K562 (cell line): ENCODE measurements at regions of chr7 and their contacts with region 1.

Region 1: DNA sequence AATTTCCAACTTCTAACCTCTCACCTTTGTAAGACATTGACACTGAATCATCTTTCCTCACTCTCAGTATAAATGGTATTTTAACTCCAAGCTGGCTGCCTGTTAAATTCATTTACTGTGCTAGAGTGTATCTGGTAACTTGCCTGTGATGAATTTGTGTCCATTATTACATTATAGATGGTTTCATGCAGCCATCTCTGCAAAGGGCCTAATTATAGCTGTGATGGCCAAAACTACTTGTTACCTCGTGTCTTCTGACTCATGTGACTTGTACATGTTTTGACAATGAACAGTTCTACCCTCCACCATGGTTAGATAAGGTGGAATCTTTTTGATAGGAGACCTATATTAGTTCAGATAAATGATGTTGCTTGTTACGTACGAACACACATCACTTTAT is 392.0 kb downstream of the PAXIP1 start:
- DNase-seq: no peak
- ATAC-seq: no peak
- H3K4me3 ChIP-seq: no peak overlapping the region
- H3K27ac ChIP-seq: no peak overlapping the region
- H3K4me1 ChIP-seq: no peaks in the 10 kb centered on the region
- H3K27me3 ChIP-seq: peaks cover 7 to 9% of the 10 kb centered on the region in 2 experiments
- CTCF ChIP-seq: no peak
- EP300 ChIP-seq: no peak
- POLR2A ChIP-seq: no peak
- RAD21 ChIP-seq: no peak

Region 2: DNA sequence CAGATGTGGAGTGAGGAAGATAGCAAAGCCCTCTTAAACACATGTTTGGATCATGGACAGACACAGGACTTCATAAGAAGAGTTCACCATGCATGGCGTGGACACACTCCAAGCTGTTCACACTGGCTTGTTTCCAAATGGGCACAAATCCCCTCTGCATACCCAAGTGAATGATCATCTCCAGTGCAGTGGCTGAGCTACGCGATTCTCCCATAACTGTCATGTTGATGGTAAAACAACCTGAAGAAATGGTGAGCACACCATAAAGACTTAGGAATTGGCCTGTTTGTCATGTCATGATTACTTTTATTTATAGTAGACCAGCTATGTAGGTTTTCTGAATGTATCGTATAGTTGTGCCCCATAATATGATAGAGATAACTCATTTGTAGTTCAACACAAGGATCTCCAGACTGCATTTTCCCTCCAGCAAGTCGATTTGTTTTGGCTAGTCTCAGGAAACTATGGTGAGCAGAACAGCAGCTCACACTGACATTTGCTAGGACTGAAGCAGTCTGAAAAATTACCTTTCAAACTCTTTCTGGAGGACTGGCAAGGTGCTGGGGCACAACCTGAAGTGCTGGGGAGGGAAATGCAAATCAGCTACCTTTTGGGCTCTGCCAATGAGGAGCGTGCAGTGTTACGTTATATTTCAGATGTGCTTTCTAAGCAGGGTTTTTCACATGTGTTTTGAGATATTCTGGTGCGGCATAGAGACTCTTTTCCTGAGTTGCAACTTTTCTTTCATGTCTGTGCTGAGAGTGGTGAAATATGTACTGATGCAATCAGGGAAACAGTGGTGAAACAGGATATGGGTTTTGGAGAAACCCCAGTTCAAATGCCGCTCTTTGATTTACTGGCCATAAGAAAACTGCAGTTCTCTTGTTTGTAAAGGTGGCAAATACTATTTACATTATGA is 1188.4 kb before region 1 on chr7:
- CTCF ChIA-PET with region 1: no interaction called
- POLR2A ChIA-PET with region 1: no interaction called
- in situ Hi-C with region 1: no loop called
- intact Hi-C with region 1: no loop called
- DNase-seq: no peak
- ATAC-seq: peak; percentile 81
- H3K4me3 ChIP-seq: no peak overlapping the region
- H3K27ac ChIP-seq: no peak overlapping the region
- H3K4me1 ChIP-seq: peaks cover 0 to 18% of the 10 kb centered on the region in 2 experiments; a peak in 1 of 5 replicates
- H3K27me3 ChIP-seq: peaks cover 6 to 22% of the 10 kb centered on the region in 2 experiments; a peak in 2 of 5 replicates
- CTCF ChIP-seq: no peak
- EP300 ChIP-seq: peak; percentile 79
- POLR2A ChIP-seq: no peak
- RAD21 ChIP-seq: peak in 1 of 2 experiments; percentile 11; a peak in 2 of 4 replicates

Region 3: GRCh38 chr7:154598864-154599263 is 12.0 kb before region 1 on chr7:
- CTCF ChIA-PET with region 1: no interaction called
- POLR2A ChIA-PET with region 1: no interaction called
- in situ Hi-C with region 1: no loop called
- intact Hi-C with region 1: loop called (anchors 1 kb)
- DNase-seq: no peak
- ATAC-seq: no peak
- H3K4me3 ChIP-seq: no peak overlapping the region
- H3K27ac ChIP-seq: no peak overlapping the region
- H3K4me1 ChIP-seq: no peaks in the 10 kb centered on the region
- H3K27me3 ChIP-seq: peaks cover 31 to 33% of the 10 kb centered on the region in 2 experiments
- CTCF ChIP-seq: no peak
- EP300 ChIP-seq: no peak
- POLR2A ChIP-seq: no peak
- RAD21 ChIP-seq: no peak

Region 4: GRCh38 chr7:154729056-154729455 is 118.2 kb after region 1 on chr7:
- CTCF ChIA-PET with region 1: no interaction called
- POLR2A ChIA-PET with region 1: no interaction called
- in situ Hi-C with region 1: no loop called
- intact Hi-C with region 1: no loop called
- DNase-seq: no peak
- ATAC-seq: no peak
- H3K4me3 ChIP-seq: no peak overlapping the region
- H3K27ac ChIP-seq: no peak overlapping the region
- H3K4me1 ChIP-seq: no peaks in the 10 kb centered on the region
- H3K27me3 ChIP-seq: peaks cover 0 to 7% of the 10 kb centered on the region in 2 experiments; a peak in 1 of 5 replicates
- CTCF ChIP-seq: no peak
- EP300 ChIP-seq: no peak
- POLR2A ChIP-seq: no peak
- RAD21 ChIP-seq: no peak